Posterior vena cava (tissue), 2 donors: ENCODE measurements at regions of chr10 and their contacts with region 1.

Region 1: GRCh38 chr10:103130910-103131309 is 62.2 kb downstream of the NT5C2 start:
- DNase-seq: no peak

Region 2: DNA sequence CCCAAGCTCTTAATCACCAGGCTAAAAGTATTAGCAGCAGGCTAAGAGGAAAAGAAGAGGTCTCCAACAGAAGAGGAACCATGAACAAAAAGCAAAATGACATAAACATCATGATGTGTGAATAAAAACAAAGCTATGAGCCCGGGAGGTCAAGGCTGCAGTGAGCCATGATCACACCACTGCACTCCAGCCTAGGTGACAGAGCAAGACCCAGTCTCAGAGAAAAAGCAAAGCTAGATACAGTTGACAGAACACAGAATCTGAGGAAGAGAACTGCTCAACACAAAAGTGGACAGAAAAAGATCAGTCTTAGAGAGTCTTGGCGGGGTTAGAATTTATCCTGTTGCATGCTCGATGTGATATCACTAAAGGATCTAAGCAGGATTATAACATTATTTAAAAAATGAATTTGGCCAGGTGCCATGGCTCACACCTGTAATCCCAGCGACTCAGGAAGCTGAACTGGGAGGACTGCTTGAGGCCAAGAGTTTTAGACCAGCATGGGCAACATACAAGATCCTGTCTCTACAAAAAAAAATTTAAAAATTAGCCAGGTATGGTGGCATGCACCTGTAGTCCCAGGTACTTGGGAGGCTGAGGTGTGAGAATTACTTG is 24.7 kb after region 1 on chr10:
- intact Hi-C with region 1: loop called in 1 of 2 experiments (anchors 2 kb)
- DNase-seq: no peak